ENCODE measurements at regions of chr7 and their contacts with region 1.

Region 1: GRCh38 chr7:98745722-98746318 is 124.0 kb downstream of the TMEM130 start:
- DNase-seq: peak; percentile 40 to 80 (median 67)
- ATAC-seq: no peak
- H3K4me3 ChIP-seq: no peak overlapping the region
- H3K4me3 Mint-ChIP-seq: no peak overlapping the region
- H3K27ac ChIP-seq: no peak overlapping the region
- H3K27ac Mint-ChIP-seq: no peak overlapping the region
- H3K4me1 ChIP-seq: no peaks in the 10 kb centered on the region
- H3K4me1 Mint-ChIP-seq: no peaks in the 10 kb centered on the region
- H3K27me3 ChIP-seq: no peaks in the 10 kb centered on the region
- H3K27me3 Mint-ChIP-seq: peaks cover 11% of the 10 kb centered on the region
- CTCF ChIP-seq: peak; percentile 70

Region 2: DNA sequence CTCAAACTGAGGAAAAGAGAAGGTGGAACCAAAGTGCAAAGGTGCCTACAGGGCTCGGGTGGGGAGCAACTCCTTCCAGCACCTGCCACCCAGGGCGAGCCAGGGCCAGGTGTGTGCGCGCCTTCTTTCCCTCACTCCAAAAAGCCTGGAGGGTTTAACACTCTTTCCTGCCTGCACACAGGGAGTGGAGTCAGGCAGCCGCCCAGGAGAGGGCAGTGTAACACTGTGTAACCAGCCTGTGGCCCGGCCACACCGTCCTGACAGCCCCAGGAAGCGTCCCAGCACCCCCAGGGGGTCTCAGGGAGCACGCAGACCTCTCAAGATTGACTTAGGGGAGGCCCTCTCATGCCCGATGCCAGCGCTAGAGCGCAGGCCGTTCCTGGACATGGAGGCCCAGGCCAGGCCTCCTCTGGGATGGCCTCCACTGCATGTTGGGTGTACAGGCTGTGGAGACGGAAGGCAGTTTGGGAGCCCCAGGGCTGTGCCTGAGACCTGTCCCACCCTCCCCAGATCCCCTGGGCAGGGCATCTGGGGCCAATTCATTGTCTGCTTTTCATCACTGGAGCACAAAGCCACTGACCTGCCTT is 450.9 kb before region 1 on chr7:
- CTCF ChIA-PET with region 1: no interaction called
- POLR2A ChIA-PET with region 1: no interaction called
- intact Hi-C with region 1: loop called in 1 of 2 experiments (anchors 10 kb)
- DNase-seq: peak in 3 of 9 experiments; percentile 22 to 37 (median 35)
- ATAC-seq: peak; percentile 49
- H3K4me3 ChIP-seq: no peak overlapping the region
- H3K4me3 Mint-ChIP-seq: no peak overlapping the region
- H3K27ac ChIP-seq: no peak overlapping the region
- H3K27ac Mint-ChIP-seq: no peak overlapping the region
- H3K4me1 ChIP-seq: no peaks in the 10 kb centered on the region
- H3K4me1 Mint-ChIP-seq: no peaks in the 10 kb centered on the region
- H3K27me3 ChIP-seq: no peaks in the 10 kb centered on the region
- H3K27me3 Mint-ChIP-seq: no peaks in the 10 kb centered on the region
- CTCF ChIP-seq: no peak

Region 3: DNA sequence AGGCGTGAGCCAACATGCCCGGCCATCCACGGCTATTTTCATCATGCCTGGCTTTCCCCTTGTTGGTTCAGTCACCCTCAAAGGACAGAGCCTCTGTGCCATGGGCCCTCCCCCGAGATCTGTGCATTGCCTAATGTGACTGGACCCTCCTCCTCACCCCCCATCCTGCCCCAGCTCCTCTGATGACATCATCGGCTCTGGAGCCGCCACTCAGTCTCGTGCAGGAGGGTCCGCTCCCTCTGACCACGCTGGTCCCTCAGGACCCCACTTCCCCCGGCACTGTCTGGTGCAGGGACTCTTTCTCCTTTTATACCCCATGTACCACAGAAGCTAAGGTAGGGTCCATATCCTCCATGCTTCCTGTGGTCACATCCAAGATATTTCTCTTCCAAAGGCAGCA is 311.7 kb before region 1 on chr7:
- CTCF ChIA-PET with region 1: interaction called, 29 read pairs
- POLR2A ChIA-PET with region 1: no interaction called
- intact Hi-C with region 1: loop called in 1 of 2 experiments (anchors 1 kb)
- DNase-seq: no peak
- ATAC-seq: no peak
- H3K4me3 ChIP-seq: no peak overlapping the region
- H3K4me3 Mint-ChIP-seq: no peak overlapping the region
- H3K27ac ChIP-seq: no peak overlapping the region
- H3K27ac Mint-ChIP-seq: no peak overlapping the region
- H3K4me1 ChIP-seq: no peaks in the 10 kb centered on the region
- H3K4me1 Mint-ChIP-seq: peaks cover 5% of the 10 kb centered on the region
- H3K27me3 ChIP-seq: no peaks in the 10 kb centered on the region
- H3K27me3 Mint-ChIP-seq: peaks cover 4% of the 10 kb centered on the region
- CTCF ChIP-seq: no peak

Region 4: DNA sequence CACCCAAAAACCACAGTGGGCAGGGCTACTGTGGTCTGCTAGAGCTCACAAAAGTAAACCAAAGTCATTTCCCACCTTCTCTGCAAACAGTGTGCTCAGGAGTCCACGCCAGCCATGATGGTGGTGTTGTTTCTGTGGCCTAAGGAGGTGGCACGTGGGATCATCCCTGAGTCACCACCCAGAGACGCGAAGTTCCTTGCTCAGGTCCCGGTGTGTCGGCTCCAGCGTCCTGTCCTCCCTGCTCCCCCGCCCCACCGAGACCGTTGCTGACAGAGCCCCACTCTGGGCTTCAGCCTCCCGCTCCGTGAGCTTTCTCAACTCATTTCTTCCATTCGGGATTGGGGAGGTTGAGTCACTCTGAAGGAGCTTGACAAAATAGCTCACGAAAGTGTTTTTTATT is 10.0 kb before region 1 on chr7:
- CTCF ChIA-PET with region 1: interaction called, 15 read pairs
- POLR2A ChIA-PET with region 1: no interaction called
- intact Hi-C with region 1: no loop called
- DNase-seq: no peak
- ATAC-seq: no peak
- H3K4me3 ChIP-seq: no peak overlapping the region
- H3K4me3 Mint-ChIP-seq: no peak overlapping the region
- H3K27ac ChIP-seq: no peak overlapping the region
- H3K27ac Mint-ChIP-seq: no peak overlapping the region
- H3K4me1 ChIP-seq: no peaks in the 10 kb centered on the region
- H3K4me1 Mint-ChIP-seq: no peaks in the 10 kb centered on the region
- H3K27me3 ChIP-seq: no peaks in the 10 kb centered on the region
- H3K27me3 Mint-ChIP-seq: peaks cover 3% of the 10 kb centered on the region
- CTCF ChIP-seq: no peak

Region 5: GRCh38 chr7:99036546-99037111 is 290.8 kb after region 1 on chr7:
- CTCF ChIA-PET with region 1: no interaction called
- POLR2A ChIA-PET with region 1: no interaction called
- intact Hi-C with region 1: no loop called
- DNase-seq: no peak
- ATAC-seq: no peak
- H3K4me3 ChIP-seq: no peak overlapping the region
- H3K4me3 Mint-ChIP-seq: no peak overlapping the region
- H3K27ac ChIP-seq: no peak overlapping the region
- H3K27ac Mint-ChIP-seq: no peak overlapping the region
- H3K4me1 ChIP-seq: no peaks in the 10 kb centered on the region
- H3K4me1 Mint-ChIP-seq: no peaks in the 10 kb centered on the region
- H3K27me3 ChIP-seq: no peaks in the 10 kb centered on the region
- H3K27me3 Mint-ChIP-seq: no peaks in the 10 kb centered on the region
- CTCF ChIP-seq: no peak